Esophagus muscularis mucosa (tissue), 4 donors: ENCODE measurements at regions of chr6 and their contacts with region 1.

Region 1: GRCh38 chr6:35342258-35343091 is at the start of gene PPARD:
- DNase-seq: peak; percentile 99
- H3K4me3 ChIP-seq: peak within 1 kb of the TSS; percentile 79 to 93 (median 83)
- H3K27ac ChIP-seq: peak within 1 kb of the TSS; percentile 90 to 92 (median 90)
- H3K4me1 ChIP-seq: peaks cover 13 to 37% (median 30%) of the 10 kb centered on the region in 4 donors
- H3K27me3 ChIP-seq: peaks cover 0 to 4% (median 0%) of the 10 kb centered on the region in 4 donors
- CTCF ChIP-seq: peak; percentile 98 to 100 (median 99)
- EP300 ChIP-seq: no peak
- POLR2A ChIP-seq: peak; percentile 72
- total RNA-seq, gene PPARD: 10.8 to 22.4 (median 16.0) TPM

Region 2: DNA sequence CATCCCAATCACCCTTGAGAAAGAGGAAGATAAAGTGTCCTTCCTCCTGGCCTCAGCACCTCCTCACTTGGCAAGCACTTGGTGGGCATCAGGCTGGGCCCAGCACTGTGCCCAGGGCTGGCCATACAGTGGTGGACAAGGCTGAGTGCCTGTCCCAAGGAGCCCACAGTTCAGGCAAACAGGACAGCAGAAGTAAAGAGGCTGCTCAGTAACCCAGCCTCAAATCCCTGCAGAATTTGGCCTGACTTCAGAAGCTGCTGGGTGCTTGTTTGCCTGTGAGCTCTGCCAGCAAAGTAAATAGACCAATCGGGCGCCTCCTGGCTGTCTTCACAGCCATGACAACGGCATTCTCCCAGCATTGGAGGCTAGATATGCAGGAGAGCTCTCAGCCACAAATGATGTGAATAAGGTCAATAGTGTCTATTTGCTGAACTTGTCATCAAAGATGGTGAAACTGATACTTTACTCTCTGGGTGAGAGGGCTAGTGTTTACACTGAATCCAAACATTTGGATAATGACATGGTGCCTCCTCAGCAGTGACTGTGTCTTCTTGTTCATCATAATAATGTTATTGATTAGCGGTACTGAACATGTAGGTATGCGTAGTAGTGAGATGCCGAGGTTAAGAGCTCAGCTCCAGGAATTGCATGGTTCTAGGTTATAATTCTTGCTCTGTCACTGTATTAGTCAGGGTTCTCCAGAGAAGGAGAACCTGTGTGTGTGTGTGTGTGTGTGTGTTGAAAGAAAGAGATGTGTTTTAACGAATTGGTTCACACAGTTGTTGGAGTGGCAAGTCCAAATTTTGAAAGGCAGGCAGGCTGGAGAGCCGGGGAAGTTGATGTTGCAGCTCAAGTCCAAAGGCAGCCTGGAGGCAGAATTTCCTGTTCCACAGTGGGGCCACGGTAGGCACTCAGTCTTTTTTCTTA is 72.9 kb after region 1 on chr6:
- intact Hi-C with region 1: loop called (anchors 2 kb)
- DNase-seq: no peak
- H3K4me3 ChIP-seq: no peak overlapping the region
- H3K27ac ChIP-seq: peak overlapping the region in 1 of 4 donors; percentile 1
- H3K4me1 ChIP-seq: peaks cover 7 to 22% (median 13%) of the 10 kb centered on the region in 4 donors
- H3K27me3 ChIP-seq: no peaks in the 10 kb centered on the region
- CTCF ChIP-seq: peak; percentile 66 to 85 (median 69)
- EP300 ChIP-seq: no peak
- POLR2A ChIP-seq: no peak

Region 3: GRCh38 chr6:35449287-35449881 is 106.9 kb after region 1 on chr6:
- intact Hi-C with region 1: loop called (anchors 1 kb)
- DNase-seq: no peak
- H3K4me3 ChIP-seq: no peak overlapping the region
- H3K27ac ChIP-seq: no peak overlapping the region
- H3K4me1 ChIP-seq: peaks cover 23 to 41% (median 30%) of the 10 kb centered on the region in 4 donors
- H3K27me3 ChIP-seq: no peaks in the 10 kb centered on the region
- CTCF ChIP-seq: peak; percentile 67 to 86 (median 75)
- EP300 ChIP-seq: no peak
- POLR2A ChIP-seq: no peak

Region 4: DNA sequence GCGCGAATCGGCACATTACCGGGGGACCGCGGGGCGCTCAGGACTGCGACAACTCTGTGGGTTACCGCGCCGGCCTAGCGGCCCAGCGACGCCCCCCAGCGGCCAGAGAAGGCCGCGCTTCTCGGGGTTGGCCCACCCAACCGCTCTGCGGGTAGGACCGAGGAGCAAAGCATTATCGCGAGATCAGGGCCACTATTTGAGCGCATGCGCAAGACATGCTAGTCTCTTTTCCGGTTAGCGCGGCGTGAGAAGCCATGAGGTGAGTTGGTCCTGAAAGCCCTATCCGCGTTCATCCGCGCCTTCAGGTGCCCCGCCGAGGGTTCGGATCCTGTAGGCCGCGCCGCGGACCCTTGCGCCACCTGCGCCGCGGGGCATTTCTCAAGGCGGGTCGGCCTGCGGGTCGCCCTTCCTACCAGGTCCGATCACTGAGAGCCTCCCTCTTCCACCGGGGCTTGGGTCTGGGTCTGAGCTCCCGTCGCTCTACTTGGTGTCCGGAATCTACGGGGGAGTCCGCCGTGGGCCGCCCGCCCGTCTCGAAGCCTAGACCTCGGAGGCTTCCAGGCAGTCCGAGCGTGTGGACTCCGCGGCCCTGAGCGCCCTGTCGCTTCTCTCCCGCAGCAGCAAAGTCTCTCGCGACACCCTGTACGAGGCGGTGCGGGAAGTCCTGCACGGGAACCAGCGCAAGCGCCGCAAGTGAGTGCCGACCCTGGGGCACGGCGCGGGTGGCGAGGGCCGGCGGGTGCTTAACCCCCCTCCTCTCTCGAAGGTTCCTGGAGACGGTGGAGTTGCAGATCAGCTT is 125.9 kb after region 1 on chr6 and contains the start of gene RPL10A:
- intact Hi-C with region 1: loop called (anchors 5 kb)
- DNase-seq: peak; percentile 99
- H3K4me3 ChIP-seq: peak within 1 kb of the TSS; percentile 64 to 87 (median 77)
- H3K27ac ChIP-seq: peak within 1 kb of the TSS; percentile 89 to 94 (median 91)
- H3K4me1 ChIP-seq: peaks cover 15 to 54% (median 51%) of the 10 kb centered on the region in 4 donors
- H3K27me3 ChIP-seq: no peaks in the 10 kb centered on the region
- CTCF ChIP-seq: peak; percentile 96 to 98 (median 98)
- EP300 ChIP-seq: no peak
- POLR2A ChIP-seq: peak; percentile 96
- total RNA-seq, gene RPL10A: 1,484 to 1,840 (median 1,566) TPM

Region 5: DNA sequence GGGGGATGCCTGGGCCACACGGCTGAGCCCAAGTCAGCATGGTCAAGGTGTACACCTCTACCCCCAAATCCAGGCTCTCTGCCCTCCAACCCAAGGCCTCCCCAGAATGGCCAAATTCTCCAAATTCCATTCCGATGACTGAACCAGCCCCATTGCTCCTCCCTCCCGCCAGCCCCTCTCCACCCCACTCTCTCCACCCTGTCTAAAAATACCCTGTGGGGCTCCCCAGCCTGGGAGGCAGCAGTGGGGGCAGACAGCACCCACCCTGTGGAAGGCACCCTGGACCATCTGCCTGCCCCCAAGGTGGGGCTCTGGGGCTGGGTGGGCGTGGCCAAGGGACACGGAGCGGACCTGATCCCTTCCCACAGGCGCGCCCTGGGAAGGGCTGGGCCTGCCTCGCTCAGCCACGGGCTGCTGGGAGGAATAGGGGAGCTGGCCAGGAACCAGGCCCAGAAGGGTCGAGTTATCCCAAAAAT is 143.0 kb after region 1 on chr6:
- intact Hi-C with region 1: no loop called
- DNase-seq: no peak
- H3K4me3 ChIP-seq: peak overlapping the region; percentile 32 to 38 (median 35)
- H3K27ac ChIP-seq: peak overlapping the region; percentile 97 to 100 (median 99)
- H3K4me1 ChIP-seq: peaks cover 51 to 96% (median 88%) of the 10 kb centered on the region in 4 donors
- H3K27me3 ChIP-seq: no peaks in the 10 kb centered on the region
- CTCF ChIP-seq: no peak
- EP300 ChIP-seq: no peak
- POLR2A ChIP-seq: no peak